ENCODE measurements at regions of chr14 and their contacts with region 1.

Region 1: GRCh38 chr14:75542588-75543091 is 20.4 kb downstream of the BATF start:
- DNase-seq: peak; percentile 77
- ATAC-seq: peak; percentile 86
- H3K4me3 Mint-ChIP-seq: peak overlapping the region; percentile 48
- H3K27ac Mint-ChIP-seq: peak overlapping the region; percentile 97
- H3K4me1 Mint-ChIP-seq: peaks cover 50% of the 10 kb centered on the region
- H3K27me3 Mint-ChIP-seq: no peaks in the 10 kb centered on the region

Region 2: GRCh38 chr14:75476274-75476995 is 66.2 kb before region 1 on chr14:
- CTCF ChIA-PET with region 1: no interaction called
- POLR2A ChIA-PET with region 1: no interaction called
- DNase-seq: no peak
- ATAC-seq: no peak
- H3K4me3 Mint-ChIP-seq: no peak overlapping the region
- H3K27ac Mint-ChIP-seq: no peak overlapping the region
- H3K4me1 Mint-ChIP-seq: no peaks in the 10 kb centered on the region
- H3K27me3 Mint-ChIP-seq: peaks cover 8% of the 10 kb centered on the region

Region 3: DNA sequence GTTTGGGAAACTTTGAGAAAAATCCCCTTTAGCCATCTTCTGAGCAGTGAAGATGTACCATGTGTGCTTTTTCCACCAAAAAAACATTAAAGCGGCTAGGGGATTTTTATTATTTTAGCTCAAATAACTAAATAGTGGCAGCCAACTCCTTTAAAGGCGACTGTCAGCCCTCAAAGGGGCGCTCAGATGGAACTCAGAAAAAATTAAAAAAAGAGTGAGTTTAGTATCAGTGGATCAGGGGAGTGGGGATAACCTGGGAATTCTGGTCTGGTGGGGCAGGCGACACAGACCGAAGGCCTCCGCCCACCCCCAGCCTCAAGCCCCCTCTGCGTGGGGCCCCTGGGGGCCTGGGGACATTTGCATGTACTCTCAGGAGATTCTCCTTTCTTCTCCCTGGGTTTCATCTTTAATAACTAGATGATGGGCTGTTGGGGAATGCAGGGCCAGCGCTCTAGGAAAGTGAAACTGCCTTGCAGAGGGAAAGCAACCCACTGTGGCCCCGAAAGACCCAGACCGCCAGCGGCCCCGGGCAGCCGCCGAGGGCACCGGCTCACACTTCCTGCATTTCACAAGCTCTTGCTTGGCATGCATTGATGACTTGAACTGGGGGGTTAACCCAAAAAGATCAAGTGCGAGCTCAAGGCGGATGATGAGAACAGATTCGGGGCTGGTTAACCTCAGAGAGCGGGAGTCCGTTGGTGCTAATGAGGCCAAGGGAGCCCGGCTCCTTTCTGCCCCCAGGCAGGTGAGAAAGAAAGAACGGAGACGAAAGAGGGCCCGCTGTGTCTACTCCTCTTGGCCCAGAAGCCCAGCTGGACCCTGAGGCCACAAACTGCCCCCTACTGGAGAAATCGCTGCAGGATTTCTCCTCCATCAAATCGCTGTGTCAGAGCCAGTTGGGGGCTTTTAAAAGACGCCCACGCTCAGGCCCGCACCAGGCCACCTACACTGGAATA is 27.7 kb before region 1 on chr14:
- CTCF ChIA-PET with region 1: interaction called, 17 read pairs
- POLR2A ChIA-PET with region 1: interaction called, 4 read pairs
- DNase-seq: peak; percentile 61
- ATAC-seq: peak; percentile 77
- H3K4me3 Mint-ChIP-seq: peak overlapping the region; percentile 79
- H3K27ac Mint-ChIP-seq: peak overlapping the region; percentile 95
- H3K4me1 Mint-ChIP-seq: peaks cover 36% of the 10 kb centered on the region
- H3K27me3 Mint-ChIP-seq: no peaks in the 10 kb centered on the region

Region 4: GRCh38 chr14:75522224-75522982 is 20.2 kb before region 1 on chr14 and contains the start of gene BATF:
- CTCF ChIA-PET with region 1: interaction called, 31 read pairs
- POLR2A ChIA-PET with region 1: interaction called, 56 read pairs
- DNase-seq: peak; percentile 87
- ATAC-seq: peak; percentile 84
- H3K4me3 Mint-ChIP-seq: peak within 1 kb of the TSS; percentile 100
- H3K27ac Mint-ChIP-seq: peak within 1 kb of the TSS; percentile 99
- H3K4me1 Mint-ChIP-seq: peaks cover 63% of the 10 kb centered on the region
- H3K27me3 Mint-ChIP-seq: no peaks in the 10 kb centered on the region
- total RNA-seq, gene BATF: 41.3 to 41.6 TPM

Region 5: GRCh38 chr14:75604856-75605851 is 62.5 kb after region 1 on chr14:
- CTCF ChIA-PET with region 1: no interaction called
- POLR2A ChIA-PET with region 1: no interaction called
- DNase-seq: no peak
- ATAC-seq: no peak
- H3K4me3 Mint-ChIP-seq: no peak overlapping the region
- H3K27ac Mint-ChIP-seq: no peak overlapping the region
- H3K4me1 Mint-ChIP-seq: no peaks in the 10 kb centered on the region
- H3K27me3 Mint-ChIP-seq: peaks cover 3% of the 10 kb centered on the region

Measured in activated CD8-positive, alpha-beta T cell treated with anti-CD3 and anti-CD28 coated beads, Interleukin-2, amount 10 ng/mL, durations not matched to agents 7 days and 5 days (primary cell).